SK-N-SH (cell line): ENCODE measurements at regions of chr1 and their contacts with region 1.

Region 1: GRCh38 chr1:90114521-90115141 is 119.7 kb downstream of the ZNF326 start:
- DNase-seq: peak; percentile 22
- H3K4me3 ChIP-seq: peak overlapping the region in 1 of 2 experiments; percentile 11; a peak in 1 of 4 replicates
- H3K27ac ChIP-seq: no peak overlapping the region
- H3K4me1 ChIP-seq: no peaks in the 10 kb centered on the region
- H3K27me3 ChIP-seq: no peaks in the 10 kb centered on the region; the same call in 1 of the 2 replicates
- CTCF ChIP-seq: peak; percentile 83
- EP300 ChIP-seq: no peak
- RAD21 ChIP-seq: peak; percentile 87

Region 2: GRCh38 chr1:90100566-90100965 is 14.1 kb before region 1 on chr1:
- CTCF ChIA-PET with region 1: interaction called, 17 read pairs
- POLR2A ChIA-PET with region 1: no interaction called
- DNase-seq: no peak
- H3K4me3 ChIP-seq: no peak overlapping the region
- H3K27ac ChIP-seq: no peak overlapping the region
- H3K4me1 ChIP-seq: peaks cover 0 to 4% of the 10 kb centered on the region in 2 experiments; a peak in 2 of 4 replicates
- H3K27me3 ChIP-seq: no peaks in the 10 kb centered on the region
- CTCF ChIP-seq: no peak
- EP300 ChIP-seq: no peak
- RAD21 ChIP-seq: no peak